ENCODE measurements at regions of chrX and their contacts with region 1.

Region 1: DNA sequence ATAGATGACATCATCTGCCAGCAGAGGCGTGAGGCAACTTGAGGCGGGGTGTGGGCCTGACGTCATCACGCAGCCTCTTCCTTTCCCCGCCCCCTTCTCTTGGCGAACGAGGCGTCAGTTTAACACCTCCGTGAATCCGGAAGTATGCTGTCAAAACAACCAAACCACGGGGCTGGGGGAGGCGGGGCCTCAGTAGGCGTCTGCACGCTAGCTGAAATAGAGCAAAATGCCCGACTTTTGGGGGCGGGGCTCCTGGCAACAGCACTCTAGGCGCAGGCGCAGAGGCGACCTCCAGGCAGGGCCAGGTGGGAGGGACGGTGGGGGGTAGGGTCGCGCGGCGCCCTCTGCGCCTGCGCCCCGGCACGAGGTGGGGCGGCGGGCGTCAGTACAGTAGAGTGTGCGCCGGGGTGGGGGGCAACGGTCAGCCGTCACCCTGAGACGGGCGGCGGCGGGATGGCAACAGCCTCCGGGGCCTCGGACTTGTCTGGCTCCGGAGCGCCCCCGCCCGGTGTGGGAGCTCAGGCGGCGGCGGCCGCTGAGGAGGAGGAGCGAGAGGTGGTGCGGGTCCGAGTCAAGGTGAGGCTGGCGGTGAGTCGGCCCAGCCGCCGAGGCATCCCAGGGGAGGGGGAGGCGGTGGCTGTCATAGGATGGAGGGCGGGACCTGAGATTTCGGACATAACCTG is at the start of gene TBC1D25:
- DNase-seq: peak; percentile 90 to 99
- ATAC-seq: peak; percentile 91 to 93
- H3K4me3 ChIP-seq: peak within 1 kb of the TSS; percentile 83
- H3K27ac ChIP-seq: peak within 1 kb of the TSS; percentile 85 to 93
- H3K4me1 ChIP-seq: peaks cover 9% of the 10 kb centered on the region
- CTCF ChIP-seq: peak; percentile 34; the same call in 2 of the 3 replicates
- EP300 ChIP-seq: no peak
- POLR2A ChIP-seq: peak; percentile 21; the same call in 1 of the 2 replicates
- RAD21 ChIP-seq: peak; percentile 9 to 33; a peak in 2 of 5 replicates
- polyA plus RNA-seq, gene TBC1D25: 8.6 and 10.8 TPM in 2 replicates

Region 2: DNA sequence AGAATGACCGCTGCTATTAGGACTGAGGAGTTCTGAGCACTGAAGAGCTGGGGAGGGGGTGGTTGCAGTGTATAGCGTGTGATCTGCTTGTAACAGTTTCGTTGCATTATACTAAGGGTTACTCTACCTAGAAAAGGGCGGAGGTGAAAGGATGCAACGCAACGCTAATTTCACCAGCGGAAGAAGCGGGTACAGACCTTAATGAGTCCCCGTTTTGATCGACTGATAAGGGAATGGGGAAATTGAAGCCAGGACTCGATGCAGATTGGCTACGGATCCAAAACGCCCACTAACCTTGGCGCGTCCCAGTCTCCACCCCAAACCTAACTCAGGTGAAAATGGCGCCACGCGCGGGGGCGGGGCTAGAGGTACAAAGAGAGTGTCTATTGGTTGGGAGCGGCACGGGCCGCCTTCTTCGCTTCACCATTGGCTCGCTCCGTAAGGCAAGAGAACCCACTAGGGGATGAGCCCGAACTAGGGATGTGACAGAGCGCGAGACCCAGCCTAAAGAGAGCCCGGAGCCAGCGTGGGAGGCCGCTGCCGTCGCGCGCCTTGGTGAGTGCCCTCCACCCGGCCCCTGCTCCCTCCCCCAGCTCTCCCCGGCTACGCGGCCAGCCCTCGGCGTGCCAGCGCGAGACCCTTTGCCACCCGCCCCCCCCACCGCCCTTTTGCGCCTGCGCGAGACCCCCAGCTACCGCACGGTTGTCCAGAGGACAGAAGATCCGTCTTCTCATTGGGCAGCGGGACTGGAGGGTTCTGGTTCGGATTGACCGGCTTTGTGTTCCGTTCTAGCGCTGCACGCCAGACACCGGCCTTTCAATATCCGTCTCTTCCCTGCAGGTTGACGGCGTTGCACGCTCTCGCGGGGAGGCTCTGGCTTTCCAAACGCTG is 17.9 kb before region 1 on chrX and contains the start of gene EBP:
- CTCF ChIA-PET with region 1: no interaction called
- POLR2A ChIA-PET with region 1: no interaction called
- DNase-seq: peak; percentile 94 to 96
- ATAC-seq: peak; percentile 99 to 100
- H3K4me3 ChIP-seq: peak within 1 kb of the TSS; percentile 88
- H3K27ac ChIP-seq: peak within 1 kb of the TSS; percentile 85 to 89
- H3K4me1 ChIP-seq: 0 out of 3 replicates have a peak, but pooled peaks cover 3% of the 10 kb centered on the region
- CTCF ChIP-seq: no peak
- EP300 ChIP-seq: no peak
- POLR2A ChIP-seq: peak; percentile 35; the same call in 1 of the 2 replicates
- RAD21 ChIP-seq: no peak
- polyA plus RNA-seq, gene EBP: 82.9 and 90.8 TPM in 2 replicates

Region 3: DNA sequence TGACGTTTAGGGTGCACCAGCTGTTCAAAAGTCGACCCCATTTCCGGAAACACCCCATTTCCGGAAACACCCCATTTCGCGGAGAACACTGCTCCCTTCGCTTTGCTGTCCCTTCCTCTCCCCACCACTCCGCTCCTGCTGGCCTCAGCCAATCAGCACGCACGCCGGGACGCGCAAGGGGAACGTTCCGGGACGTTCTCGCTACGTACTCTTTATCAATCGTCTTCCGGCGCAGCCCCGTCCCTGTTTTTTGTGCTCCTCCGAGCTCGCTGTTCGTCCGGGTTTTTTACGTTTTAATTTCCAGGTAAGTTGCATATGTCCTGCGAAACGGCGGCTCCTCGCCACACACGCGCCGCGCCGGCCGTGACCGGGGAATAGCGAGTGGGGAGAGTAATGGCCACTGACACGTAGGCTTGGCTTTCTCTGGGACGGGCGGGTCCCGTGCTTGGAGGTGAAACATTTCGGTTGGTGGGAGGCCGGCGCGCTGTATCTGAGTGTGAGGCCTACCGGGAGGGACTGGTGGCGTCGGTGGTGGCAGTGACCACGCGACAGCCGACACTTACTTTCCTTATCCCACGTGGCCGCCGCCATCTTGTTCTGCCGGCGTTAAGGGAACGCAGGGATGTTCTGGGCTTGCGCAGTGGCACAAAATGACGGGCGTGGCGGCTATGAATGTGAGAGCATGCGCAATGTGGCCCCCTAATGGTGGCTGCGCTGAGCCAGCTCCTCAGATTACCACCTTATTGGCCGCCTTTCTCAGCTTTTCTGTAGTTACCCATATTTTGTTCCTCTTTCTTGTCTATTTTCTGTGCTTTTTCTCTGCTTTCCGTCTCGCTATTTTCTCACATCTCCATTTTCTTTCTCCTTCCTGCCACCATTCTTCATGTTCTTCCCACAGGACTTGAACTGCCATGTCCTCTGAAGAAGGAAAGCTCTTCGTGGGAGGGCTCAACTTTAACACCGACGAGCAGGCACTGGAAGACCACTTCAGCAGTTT is 35.1 kb after region 1 on chrX and contains the start of gene RBM3:
- CTCF ChIA-PET with region 1: interaction called, 3 read pairs
- POLR2A ChIA-PET with region 1: interaction called, 14 read pairs
- DNase-seq: peak; percentile 86 to 95
- ATAC-seq: peak; percentile 98
- H3K4me3 ChIP-seq: peak within 1 kb of the TSS; percentile 75
- H3K27ac ChIP-seq: peak within 1 kb of the TSS; percentile 93 to 100
- H3K4me1 ChIP-seq: peaks cover 23% of the 10 kb centered on the region; the same call in 2 of the 3 replicates
- CTCF ChIP-seq: peak; percentile 28; the same call in 2 of the 3 replicates
- EP300 ChIP-seq: no peak
- POLR2A ChIP-seq: peak; percentile 43
- RAD21 ChIP-seq: no peak
- polyA plus RNA-seq, gene RBM3: 214 and 337 TPM in 2 replicates